PC-9 (cell line): ENCODE measurements at regions of chr2 and their contacts with region 1.

Region 1: GRCh38 chr2:234881413-234882241 is 70.2 kb upstream of the SH3BP4 start:
- DNase-seq: peak; percentile 88 to 92
- H3K4me3 ChIP-seq: peak overlapping the region; percentile 41; the same call in 1 of the 2 replicates
- H3K27ac ChIP-seq: peak overlapping the region; percentile 82
- H3K4me1 ChIP-seq: peaks cover 47% of the 10 kb centered on the region
- H3K27me3 ChIP-seq: no peaks in the 10 kb centered on the region
- CTCF ChIP-seq: peak; percentile 97

Region 2: GRCh38 chr2:234500394-234501006 is 381.1 kb before region 1 on chr2:
- CTCF ChIA-PET with region 1: no interaction called
- POLR2A ChIA-PET with region 1: interaction called, 14 read pairs
- intact Hi-C with region 1: no loop called
- DNase-seq: peak; percentile 46 to 57
- H3K4me3 ChIP-seq: no peak overlapping the region
- H3K27ac ChIP-seq: no peak overlapping the region
- H3K4me1 ChIP-seq: peaks cover 17% of the 10 kb centered on the region
- H3K27me3 ChIP-seq: no peaks in the 10 kb centered on the region
- CTCF ChIP-seq: peak; percentile 70

Region 3: DNA sequence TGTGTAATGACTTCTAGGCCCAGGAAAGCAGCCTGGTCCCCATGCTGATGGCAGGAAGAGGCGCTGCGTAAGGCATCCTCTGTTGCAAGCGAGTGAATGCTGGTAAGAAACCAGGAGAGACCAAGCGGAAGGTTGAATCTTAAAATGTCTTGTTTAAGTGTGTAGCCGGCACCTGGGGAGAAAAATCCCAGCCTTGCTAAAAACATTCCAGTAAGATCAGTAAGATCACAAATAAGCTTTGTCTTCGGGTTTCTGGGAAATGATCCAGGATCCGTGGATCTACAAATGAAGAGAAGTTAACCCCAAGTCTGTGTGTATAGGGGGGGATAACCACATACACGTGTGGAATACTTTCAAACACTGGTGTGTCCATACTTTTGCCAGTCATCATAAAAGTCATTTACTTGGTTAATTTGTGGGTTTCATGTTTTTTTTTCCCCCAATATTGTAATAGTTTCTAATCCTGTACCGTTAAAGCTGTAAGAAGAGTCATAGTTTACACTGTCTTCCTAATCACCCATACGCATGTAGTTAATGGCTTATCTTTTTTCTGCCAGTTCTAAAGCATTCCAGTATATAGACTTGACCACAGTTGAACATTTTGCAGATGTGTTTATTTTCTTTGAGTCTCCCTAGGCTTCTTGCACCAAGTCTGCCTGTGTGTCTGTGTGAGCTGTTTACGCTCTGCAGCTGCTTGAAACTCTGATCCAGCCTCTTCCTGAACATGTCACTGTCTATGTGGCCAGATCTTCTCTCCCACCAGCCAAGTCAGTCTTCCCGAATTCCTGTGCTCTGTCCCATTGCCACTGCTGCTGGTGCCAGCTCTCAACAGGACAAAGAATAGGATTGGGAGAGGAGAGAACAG is 248.9 kb before region 1 on chr2:
- CTCF ChIA-PET with region 1: interaction called, 3 read pairs
- POLR2A ChIA-PET with region 1: no interaction called
- intact Hi-C with region 1: loop called (anchors 5 kb)
- DNase-seq: peak in 1 of 2 experiments; percentile 39
- H3K4me3 ChIP-seq: no peak overlapping the region
- H3K27ac ChIP-seq: 0 out of 2 replicates have a peak overlapping the region, but pooled peaks have one; percentile 27
- H3K4me1 ChIP-seq: peaks cover 32% of the 10 kb centered on the region
- H3K27me3 ChIP-seq: no peaks in the 10 kb centered on the region
- CTCF ChIP-seq: no peak

Region 4: GRCh38 chr2:234864518-234864917 is 17.1 kb before region 1 on chr2:
- CTCF ChIA-PET with region 1: no interaction called
- POLR2A ChIA-PET with region 1: no interaction called
- intact Hi-C with region 1: no loop called
- DNase-seq: no peak
- H3K4me3 ChIP-seq: no peak overlapping the region
- H3K27ac ChIP-seq: no peak overlapping the region
- H3K4me1 ChIP-seq: no peaks in the 10 kb centered on the region
- H3K27me3 ChIP-seq: no peaks in the 10 kb centered on the region
- CTCF ChIP-seq: no peak

Region 5: DNA sequence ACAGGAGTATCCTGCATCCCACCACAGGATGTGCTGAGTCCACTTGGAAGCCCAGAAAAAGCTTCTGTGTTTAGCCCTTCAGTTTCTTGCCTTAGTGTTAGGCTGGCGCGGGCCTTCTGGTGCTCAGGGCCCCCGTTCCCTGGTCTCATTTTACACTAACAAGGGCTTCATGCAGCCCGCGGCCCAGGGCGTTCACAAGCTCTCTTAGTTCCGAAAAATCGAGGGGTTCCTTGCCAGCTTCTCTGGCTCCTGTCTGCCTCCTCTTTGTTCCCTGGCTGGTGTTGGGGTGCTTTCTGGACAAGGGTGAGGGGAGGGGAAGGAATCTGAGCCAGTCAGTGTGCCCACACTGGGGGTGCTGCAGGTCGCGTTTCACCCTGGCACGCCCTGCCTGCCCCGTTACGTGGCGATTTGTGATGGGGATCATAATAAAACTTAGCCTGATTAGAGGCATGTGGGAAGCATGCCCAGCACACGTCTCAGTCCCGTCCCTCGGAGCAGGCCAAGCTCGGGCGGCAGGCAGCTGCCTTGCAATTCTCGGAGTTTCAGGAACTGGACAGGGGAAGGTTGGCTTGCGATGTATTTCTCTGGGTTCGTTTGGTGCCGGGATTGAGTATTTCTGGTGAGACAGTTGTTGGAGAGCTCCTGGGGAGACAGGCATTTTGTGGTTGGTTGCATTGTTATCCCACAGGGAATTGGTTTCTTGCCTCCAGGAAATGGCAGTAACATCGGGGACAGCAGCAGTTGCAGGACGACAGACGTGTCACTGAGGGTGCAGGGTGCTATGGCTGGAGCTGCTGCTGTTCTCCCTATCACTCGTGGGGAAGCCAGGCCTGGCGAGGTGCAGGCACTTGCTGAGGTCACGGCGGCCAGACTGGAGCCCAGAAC is 93.1 kb after region 1 on chr2:
- CTCF ChIA-PET with region 1: no interaction called
- POLR2A ChIA-PET with region 1: no interaction called
- intact Hi-C with region 1: loop called (anchors 2 kb)
- DNase-seq: no peak
- H3K4me3 ChIP-seq: no peak overlapping the region
- H3K27ac ChIP-seq: no peak overlapping the region
- H3K4me1 ChIP-seq: peaks cover 60% of the 10 kb centered on the region
- H3K27me3 ChIP-seq: no peaks in the 10 kb centered on the region
- CTCF ChIP-seq: no peak

Region 6: DNA sequence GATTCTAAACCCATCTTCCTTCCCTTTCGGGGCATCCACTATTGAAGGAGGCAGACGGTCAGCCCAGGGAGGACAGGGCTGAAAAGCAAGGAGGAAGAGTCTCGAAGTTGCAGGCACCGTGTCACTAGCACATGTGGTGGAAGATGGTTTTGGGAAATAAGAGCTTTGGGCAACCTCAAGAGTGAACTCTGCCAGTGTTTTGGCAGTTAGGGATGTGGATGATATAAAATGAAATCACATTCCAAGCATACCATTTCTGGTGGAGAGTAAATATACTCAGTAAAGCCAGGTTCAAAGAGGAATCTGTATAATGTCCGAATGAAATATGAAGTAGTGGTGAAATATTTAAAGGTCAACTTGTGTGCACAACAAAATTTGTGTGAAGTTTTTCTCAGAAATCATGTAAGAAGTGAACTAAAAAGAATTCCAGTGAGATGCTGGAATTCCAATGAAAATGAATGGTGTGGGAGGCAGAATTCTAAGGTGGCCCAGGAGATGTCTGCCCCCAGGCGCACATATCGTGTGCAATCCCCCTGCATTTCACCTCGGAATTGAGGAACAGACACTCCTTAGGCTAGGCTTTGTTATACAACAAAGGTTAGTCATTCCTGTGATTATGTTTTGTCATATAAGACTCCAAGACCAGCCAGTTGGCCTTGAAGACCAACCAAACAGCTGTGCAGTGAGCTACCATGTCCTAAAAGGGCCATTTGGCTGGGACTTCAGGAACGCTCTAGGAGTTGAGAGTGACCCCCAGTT is 217.3 kb after region 1 on chr2:
- CTCF ChIA-PET with region 1: no interaction called
- POLR2A ChIA-PET with region 1: no interaction called
- intact Hi-C with region 1: loop called (anchors 2 kb)
- DNase-seq: peak in 1 of 2 experiments; percentile 90
- H3K4me3 ChIP-seq: no peak overlapping the region
- H3K27ac ChIP-seq: peak overlapping the region; percentile 23
- H3K4me1 ChIP-seq: peaks cover 24% of the 10 kb centered on the region
- H3K27me3 ChIP-seq: no peaks in the 10 kb centered on the region
- CTCF ChIP-seq: no peak